MCF 10A (cell line): ENCODE measurements at regions of chr1 and their contacts with region 1.

Region 1: DNA sequence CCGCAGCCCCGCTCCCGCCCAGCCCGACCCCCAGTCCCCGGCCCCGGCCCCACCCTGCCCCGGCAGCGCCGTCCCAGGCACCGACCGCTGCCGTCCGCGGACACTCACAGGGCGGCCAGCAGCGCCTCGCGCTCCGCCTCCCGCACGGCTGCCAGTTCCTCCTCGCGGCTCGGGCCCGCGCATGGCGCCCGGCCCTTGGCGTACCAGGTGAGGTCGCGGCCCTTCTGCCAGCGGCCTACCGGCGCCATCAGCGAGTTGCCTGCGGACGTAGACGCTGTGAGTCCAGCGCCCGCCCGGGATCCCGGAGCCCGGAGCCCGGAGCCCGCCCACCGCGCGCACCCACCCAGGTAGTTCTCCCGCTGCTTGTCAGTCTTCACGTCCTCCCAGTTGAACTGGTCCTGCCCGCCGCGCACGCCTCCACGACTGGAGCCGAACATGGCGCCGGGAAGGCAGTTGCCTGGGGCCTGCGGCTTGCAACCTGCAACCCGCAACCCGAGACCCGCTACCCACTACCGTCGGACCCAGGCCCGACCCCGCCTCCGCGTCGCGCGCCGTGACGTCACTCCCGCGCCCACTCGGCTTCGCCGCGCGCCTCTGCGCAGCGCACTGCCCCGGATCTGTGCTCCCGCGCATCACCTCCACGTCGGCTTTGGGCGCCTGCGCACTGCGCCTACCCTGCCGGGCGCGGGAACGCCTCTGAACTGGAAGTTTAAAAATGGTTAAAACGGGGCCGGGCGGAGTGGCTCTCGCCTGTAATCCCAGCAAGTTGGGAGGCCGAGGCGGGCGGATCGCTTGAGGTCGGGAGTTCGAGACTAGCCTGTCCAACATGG is at the start of gene C1orf35:
- DNase-seq: peak; percentile 98
- H3K4me3 Mint-ChIP-seq: peak within 1 kb of the TSS; percentile 87
- H3K27ac Mint-ChIP-seq: peak within 1 kb of the TSS; percentile 80
- H3K4me1 Mint-ChIP-seq: peaks cover 23% of the 10 kb centered on the region
- H3K27me3 Mint-ChIP-seq: no peaks in the 10 kb centered on the region
- CTCF ChIP-seq: no peak
- total RNA-seq, gene C1orf35: 48.9 and 49.2 TPM in 2 replicates

Region 2: GRCh38 chr1:228087771-228088251 is 15.2 kb before region 1 on chr1:
- CTCF ChIA-PET with region 1: interaction called, 12 read pairs
- POLR2A ChIA-PET with region 1: interaction called, 128 read pairs
- intact Hi-C with region 1: loop called (anchors 2 kb)
- DNase-seq: peak; percentile 95
- H3K4me3 Mint-ChIP-seq: peak overlapping the region; percentile 77
- H3K27ac Mint-ChIP-seq: peak overlapping the region; percentile 78
- H3K4me1 Mint-ChIP-seq: peaks cover 82% of the 10 kb centered on the region
- H3K27me3 Mint-ChIP-seq: no peaks in the 10 kb centered on the region
- CTCF ChIP-seq: no peak

Region 3: DNA sequence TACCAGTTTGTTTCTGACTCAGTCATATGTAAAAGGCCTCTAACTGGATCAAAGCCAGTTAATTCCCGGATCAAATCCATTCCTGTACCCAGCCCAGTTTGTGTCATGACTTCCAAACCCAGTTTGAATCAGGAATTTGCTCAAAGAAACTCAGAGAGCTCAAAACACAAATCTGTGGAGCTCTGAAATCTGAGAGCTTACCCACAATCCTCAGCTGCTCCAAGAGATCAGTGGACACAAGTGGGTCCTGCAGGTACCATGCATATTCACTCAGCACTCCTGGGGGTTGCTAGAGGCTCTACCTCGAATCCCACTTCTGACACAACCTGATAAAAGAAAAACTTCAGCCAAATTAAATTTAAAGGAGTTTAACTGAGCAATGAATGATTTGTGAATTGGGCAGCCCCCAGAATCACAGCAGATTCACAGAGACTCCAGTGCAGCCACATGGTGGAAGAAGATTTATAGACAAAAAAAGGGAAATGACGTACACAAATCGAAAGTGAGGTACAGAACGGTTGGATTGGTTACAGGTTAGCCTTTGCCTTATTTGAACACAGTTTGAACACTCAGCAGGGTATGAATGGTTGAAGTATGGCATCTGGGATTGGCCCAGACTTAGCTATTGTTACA is 18.0 kb after region 1 on chr1:
- CTCF ChIA-PET with region 1: interaction called, 5 read pairs
- POLR2A ChIA-PET with region 1: interaction called, 84 read pairs
- intact Hi-C with region 1: no loop called
- DNase-seq: no peak
- H3K4me3 Mint-ChIP-seq: no peak overlapping the region
- H3K27ac Mint-ChIP-seq: no peak overlapping the region
- H3K4me1 Mint-ChIP-seq: no peaks in the 10 kb centered on the region
- H3K27me3 Mint-ChIP-seq: no peaks in the 10 kb centered on the region
- CTCF ChIP-seq: no peak